ENCODE measurements at regions of chr11 and their contacts with region 1.

Region 1: DNA sequence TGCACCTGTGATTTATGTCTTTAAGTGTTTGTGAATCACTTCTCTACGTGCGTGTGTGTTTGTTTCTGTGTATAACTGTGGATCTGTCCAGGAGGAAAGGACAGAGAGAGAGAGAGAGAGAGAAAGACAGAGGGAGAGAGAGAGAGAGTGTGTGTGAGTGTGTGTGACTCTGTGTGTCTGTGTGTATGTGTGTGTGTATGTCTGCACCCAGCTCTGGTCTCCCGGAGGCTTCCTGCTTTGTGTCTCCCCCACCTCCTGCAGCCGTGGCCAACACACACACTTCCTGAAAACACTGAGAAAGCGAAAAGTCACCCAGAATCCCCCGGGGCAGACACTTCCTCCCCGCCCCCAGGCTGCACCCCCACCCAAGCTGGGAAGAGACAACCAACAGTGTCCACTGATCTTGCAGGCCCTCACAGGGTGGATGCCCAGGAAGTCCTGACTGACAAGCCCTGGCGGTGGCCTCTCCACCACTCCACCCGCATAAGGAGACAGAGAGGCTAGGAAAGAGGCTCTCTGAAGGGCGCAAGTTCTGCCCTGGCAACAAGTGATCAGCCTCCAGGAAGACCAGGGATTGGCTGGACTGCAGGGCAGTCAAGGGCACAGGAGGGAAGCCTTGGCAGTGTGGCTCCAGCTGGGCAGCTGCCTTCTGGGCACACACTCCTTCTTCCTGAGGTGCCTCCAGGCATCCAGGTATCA is 30.0 kb downstream of the ARAP1 start:
- DNase-seq: peak; percentile 89 to 90
- ATAC-seq: peak; percentile 84

Region 2: GRCh38 chr11:72585762-72586311 is 136.4 kb before region 1 on chr11:
- intact Hi-C with region 1: no loop called
- DNase-seq: peak in 1 of 2 donors; percentile 71
- ATAC-seq: peak; percentile 85

Region 3: GRCh38 chr11:72758690-72759389 is 36.6 kb after region 1 on chr11:
- intact Hi-C with region 1: no loop called
- DNase-seq: no peak
- ATAC-seq: no peak

Region 4: DNA sequence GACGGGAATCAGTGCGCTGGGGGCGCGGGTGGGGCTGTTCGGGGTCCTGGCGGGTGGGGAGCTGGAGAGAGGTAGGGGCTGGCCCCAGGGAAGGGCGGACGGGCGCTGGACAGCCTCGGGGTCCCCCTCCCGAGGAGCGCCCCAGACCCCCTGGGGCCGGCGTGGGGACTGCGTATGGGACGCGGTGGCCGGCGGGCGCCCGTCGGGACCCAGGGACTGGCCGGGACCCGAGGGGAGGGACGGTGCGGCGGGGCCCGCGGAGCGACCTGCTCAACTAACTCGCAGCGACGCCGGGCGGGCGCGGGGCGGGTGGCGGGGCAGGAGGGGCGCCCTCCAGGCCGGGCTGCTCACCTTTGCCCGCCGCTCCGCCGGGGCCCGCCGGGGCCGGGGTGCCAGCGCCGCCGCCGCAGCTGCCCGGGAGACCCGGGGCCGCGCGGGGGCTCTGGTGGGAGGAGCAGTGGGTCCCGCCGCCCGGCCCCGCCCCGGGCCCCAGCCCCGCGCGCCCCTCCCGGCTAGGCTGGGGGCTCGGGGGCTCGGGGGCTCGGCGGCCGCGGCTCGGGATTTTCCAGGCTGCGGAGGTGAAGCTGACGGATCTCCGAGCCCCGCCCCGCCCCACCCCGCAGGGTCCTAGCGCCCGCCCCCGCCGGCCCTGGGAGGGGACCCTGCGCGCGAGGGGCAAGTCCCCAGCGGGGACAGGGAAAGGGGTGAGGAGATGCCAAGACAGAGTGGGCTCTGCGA is 59.3 kb after region 1 on chr11:
- intact Hi-C with region 1: no loop called
- DNase-seq: peak in 1 of 2 donors; percentile 77
- ATAC-seq: peak; percentile 19

Region 5: GRCh38 chr11:72793425-72794367 is 71.5 kb after region 1 on chr11 and contains the start of gene STARD10:
- intact Hi-C with region 1: loop called in 1 of 2 experiments (anchors 5 kb)
- DNase-seq: peak; percentile 95 to 99
- ATAC-seq: peak; percentile 95
- total RNA-seq, gene STARD10: 417 to 464 TPM

Region 6: DNA sequence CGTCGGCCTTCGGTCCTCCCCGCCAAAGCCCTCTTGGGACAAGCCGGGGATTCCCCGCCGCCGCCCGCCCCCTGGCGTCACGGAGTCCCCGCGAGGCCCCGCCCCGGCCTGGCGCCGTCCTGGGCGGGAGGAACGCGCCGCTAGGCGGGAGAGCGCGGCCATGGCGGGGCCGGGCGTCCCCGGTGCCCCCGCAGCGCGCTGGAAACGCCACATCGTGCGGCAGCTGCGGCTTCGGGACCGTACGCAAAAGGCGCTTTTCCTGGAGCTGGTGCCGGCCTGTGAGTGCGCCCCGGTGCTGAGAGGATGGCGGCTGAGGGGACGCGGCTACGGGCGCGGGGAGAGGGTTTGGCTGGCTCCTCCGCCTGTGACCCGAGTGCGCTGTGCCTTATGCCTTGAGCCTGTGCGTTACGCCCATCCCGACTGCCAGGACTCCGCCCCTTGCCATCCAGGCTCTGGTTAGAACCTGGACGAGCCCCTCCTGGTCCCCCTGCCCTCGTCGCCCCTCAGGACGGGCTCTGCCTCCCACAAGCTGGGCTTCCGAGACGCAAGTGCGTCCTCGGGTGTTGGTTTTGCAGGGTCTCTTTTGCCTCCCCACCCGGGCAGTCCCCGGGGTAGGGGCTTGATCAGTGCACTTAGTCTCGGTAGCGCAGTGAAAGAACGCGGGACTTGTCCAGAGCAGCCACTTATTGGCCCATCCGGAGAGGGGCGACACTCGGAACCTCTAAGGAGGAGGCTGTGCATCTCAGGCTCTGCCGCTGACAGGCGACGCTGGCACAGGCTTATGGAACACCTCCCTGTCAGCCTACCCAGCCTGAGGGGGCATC is 92.3 kb after region 1 on chr11 and contains the start of gene ATG16L2:
- intact Hi-C with region 1: loop called in 1 of 2 experiments (anchors 5 kb)
- DNase-seq: peak; percentile 83 to 91
- ATAC-seq: peak; percentile 86
- total RNA-seq, gene ATG16L2: 44.4 to 54.2 TPM

Region 7: DNA sequence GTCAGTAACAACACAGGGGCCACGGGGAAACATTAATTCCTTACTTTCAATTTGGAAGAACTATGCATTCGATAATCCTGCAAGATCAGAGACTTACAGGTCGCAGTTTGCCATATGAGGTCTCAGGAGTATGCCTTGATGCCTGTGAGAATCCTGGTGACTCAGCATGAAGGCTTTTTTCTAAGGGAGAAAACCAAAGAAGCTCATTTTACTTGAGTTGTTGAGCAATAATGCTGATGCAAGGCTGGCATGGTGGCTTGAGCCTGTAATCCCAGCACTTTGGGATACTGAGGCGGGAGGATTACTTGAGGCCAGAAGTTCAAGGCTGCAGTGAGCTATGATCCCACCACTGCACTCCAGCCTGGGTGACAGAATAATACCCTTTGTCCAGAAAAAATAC is 118.6 kb after region 1 on chr11:
- intact Hi-C with region 1: no loop called
- DNase-seq: no peak
- ATAC-seq: no peak

Region 8: GRCh38 chr11:73177778-73178577 is 455.8 kb after region 1 on chr11:
- intact Hi-C with region 1: loop called (anchors 5 to 10 kb)
- DNase-seq: peak; percentile 75 to 87
- ATAC-seq: peak; percentile 67